ENCODE measurements at regions of chr3 and their contacts with region 1.

Region 1: GRCh38 chr3:20160230-20160629 is 25.8 kb downstream of the SGO1 start:
- DNase-seq: no peak
- ATAC-seq: no peak
- H3K4me3 ChIP-seq: no peak overlapping the region
- H3K27ac ChIP-seq: no peak overlapping the region
- H3K4me1 ChIP-seq: no peaks in the 10 kb centered on the region
- H3K27me3 ChIP-seq: no peaks in the 10 kb centered on the region
- CTCF ChIP-seq: no peak

Region 2: DNA sequence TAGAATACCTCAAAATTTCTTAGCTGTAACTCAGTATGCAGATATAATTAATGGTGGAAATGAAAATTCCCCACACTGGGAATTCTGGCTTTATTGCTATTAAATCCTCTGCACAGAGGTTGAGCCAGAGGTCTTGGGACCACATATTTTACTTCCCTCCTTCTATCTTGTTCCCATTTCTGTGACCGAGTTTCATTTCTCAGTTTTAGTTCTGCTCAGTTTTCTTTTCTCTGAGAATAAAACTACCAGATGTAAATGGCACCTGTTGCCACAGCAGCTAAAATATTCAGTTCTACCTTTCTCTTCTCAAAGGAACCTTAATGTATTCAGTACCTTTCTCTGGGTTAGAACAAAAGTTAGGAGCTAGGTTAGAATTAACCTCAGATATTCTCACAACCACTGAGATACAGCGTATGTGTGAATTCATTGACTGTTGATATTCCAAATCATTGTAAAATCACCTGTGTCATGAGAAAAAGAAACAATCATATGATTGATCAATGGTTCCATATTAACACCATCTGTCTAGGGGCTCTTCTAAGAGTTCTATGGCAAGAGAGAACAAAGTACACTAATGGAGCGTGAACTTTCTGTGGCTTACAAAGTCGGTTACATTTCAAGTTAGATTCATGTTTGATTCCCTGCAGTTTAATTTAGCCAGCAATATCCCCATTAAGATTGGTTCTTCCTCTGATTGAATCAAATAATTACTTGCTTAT is 600.3 kb before region 1 on chr3:
- intact Hi-C with region 1: loop called in 1 of 2 experiments (anchors 5 kb)
- DNase-seq: no peak
- ATAC-seq: no peak
- H3K4me3 ChIP-seq: no peak overlapping the region
- H3K27ac ChIP-seq: no peak overlapping the region
- H3K4me1 ChIP-seq: no peaks in the 10 kb centered on the region
- H3K27me3 ChIP-seq: peaks cover 0 to 2% (median 0%) of the 10 kb centered on the region in 3 donors
- CTCF ChIP-seq: no peak

Measured in psoas muscle (tissue), 8 donors.